HCT116 (cell line): ENCODE measurements at regions of chr9 and their contacts with region 1.

Region 1: GRCh38 chr9:101235105-101235866 is 149.5 kb downstream of the BAAT start:
- DNase-seq: peak; percentile 13
- ATAC-seq: peak; percentile 67
- H3K4me3 ChIP-seq: no peak overlapping the region
- H3K27ac ChIP-seq: no peak overlapping the region
- H3K4me1 ChIP-seq: no peaks in the 10 kb centered on the region
- H3K27me3 ChIP-seq: peaks cover 3% of the 10 kb centered on the region; the same call in 1 of the 2 replicates
- CTCF ChIP-seq: peak; percentile 33 to 58 (median 54); a peak in 5 of 6 replicates
- POLR2A ChIP-seq: no peak
- RAD21 ChIP-seq: peak; percentile 71

Region 2: GRCh38 chr9:100700689-100701318 is 534.5 kb before region 1 on chr9:
- CTCF ChIA-PET with region 1: interaction called, 8 read pairs
- POLR2A ChIA-PET with region 1: no interaction called
- RAD21 ChIA-PET with region 1: no interaction called
- intact Hi-C with region 1: loop called (anchors 5 kb)
- DNase-seq: peak; percentile 32
- ATAC-seq: peak; percentile 88
- H3K4me3 ChIP-seq: no peak overlapping the region
- H3K27ac ChIP-seq: no peak overlapping the region
- H3K4me1 ChIP-seq: no peaks in the 10 kb centered on the region
- H3K27me3 ChIP-seq: 0 out of 2 replicates have a peak, but pooled peaks cover 3% of the 10 kb centered on the region
- CTCF ChIP-seq: peak; percentile 45 to 83 (median 60); a peak in 5 of 6 replicates
- POLR2A ChIP-seq: no peak
- RAD21 ChIP-seq: peak; percentile 61

Region 3: DNA sequence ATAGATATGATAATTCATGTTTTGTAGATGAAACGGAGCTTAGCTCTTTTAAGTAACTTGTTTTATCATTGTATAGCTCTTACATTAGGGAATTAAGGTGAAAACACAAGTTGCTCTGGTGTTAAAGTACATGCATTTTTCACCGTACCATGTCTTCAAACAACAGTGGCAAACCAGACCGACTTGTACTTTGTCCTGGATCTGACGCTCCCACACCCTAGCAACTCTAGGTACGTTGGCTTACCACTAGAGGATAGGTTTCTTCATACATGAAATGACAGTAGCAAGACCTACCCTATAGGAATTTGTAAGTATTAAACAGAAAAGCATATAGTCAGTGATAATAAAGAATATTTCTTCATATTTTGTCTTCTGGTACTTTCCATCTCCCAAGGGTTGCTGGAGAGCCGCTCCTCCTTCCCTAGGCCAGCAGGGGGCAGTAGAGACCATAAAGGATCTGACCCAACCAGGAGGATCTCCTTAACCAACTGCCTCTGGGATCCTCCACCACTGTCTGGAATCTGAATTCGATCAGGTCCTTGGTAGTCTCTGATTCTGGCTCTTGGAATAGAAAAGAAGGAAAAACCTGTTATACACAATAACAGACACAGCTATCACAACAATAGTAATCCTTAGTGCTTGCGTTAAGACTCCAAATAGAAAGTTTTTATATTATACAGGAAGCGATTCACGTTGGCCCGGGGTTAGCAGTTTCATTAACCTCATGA is 520.8 kb before region 1 on chr9:
- CTCF ChIA-PET with region 1: interaction called, 5 read pairs
- POLR2A ChIA-PET with region 1: no interaction called
- RAD21 ChIA-PET with region 1: no interaction called
- intact Hi-C with region 1: loop called (anchors 1 kb)
- DNase-seq: peak; percentile 41
- ATAC-seq: peak; percentile 99
- H3K4me3 ChIP-seq: no peak overlapping the region
- H3K27ac ChIP-seq: no peak overlapping the region
- H3K4me1 ChIP-seq: no peaks in the 10 kb centered on the region
- H3K27me3 ChIP-seq: peaks cover 10% of the 10 kb centered on the region; the same call in 1 of the 2 replicates
- CTCF ChIP-seq: peak; percentile 52 to 95 (median 94)
- POLR2A ChIP-seq: no peak
- RAD21 ChIP-seq: peak; percentile 82

Region 4: DNA sequence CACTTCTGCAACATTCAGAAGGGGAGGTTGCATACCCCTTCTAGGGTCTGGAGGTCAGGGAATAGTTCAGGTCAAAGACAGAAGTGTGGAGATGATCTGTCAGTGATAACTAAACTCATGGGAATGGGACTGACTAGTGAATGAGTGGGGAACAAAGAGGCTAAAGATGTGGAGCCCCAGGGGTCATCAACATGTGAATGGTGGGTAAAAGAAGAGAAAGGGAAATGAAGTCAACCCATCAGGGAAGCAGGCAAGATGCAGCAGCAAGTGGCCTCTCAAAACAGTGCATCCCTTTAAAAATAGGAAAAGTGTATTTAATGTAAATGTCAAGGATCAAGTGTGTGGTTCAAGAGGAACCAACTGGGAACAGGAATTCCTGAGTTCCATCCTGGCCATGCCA is 136.9 kb before region 1 on chr9:
- CTCF ChIA-PET with region 1: no interaction called
- POLR2A ChIA-PET with region 1: no interaction called
- RAD21 ChIA-PET with region 1: no interaction called
- intact Hi-C with region 1: no loop called
- DNase-seq: no peak
- ATAC-seq: no peak
- H3K4me3 ChIP-seq: no peak overlapping the region
- H3K27ac ChIP-seq: no peak overlapping the region
- H3K4me1 ChIP-seq: no peaks in the 10 kb centered on the region
- H3K27me3 ChIP-seq: peaks cover 6% of the 10 kb centered on the region; the same call in 1 of the 2 replicates
- CTCF ChIP-seq: no peak
- POLR2A ChIP-seq: no peak
- RAD21 ChIP-seq: no peak

Region 5: DNA sequence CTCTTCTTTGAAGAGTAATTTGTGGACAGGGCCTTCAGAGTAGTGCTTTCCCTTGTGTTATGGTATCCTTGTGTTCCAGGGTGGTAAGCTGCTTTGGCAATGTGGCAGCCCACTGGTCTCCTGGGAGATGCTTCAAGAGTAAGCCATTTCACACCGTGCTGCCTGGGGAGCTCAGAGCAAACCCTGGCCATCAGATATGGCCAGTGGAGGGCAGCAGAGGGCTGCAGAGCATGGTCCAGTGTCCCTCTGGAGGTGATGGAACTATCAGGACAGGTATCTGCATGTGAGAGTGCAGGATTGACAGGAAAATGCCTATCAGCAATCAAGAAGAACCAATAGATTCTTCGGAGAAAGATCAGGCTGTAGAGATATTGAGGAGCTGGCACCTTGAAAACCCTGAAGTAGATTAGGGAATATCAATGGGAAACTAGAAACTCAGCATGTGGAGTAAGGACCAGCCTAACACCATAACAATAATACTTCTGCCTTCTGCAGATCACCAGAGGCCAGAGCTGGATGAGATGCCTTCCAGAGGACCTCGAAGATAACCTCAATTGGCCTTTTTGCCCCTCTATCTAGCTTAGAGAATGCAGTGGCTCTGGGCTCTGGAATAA is 116.0 kb before region 1 on chr9:
- CTCF ChIA-PET with region 1: interaction called, 9 read pairs
- POLR2A ChIA-PET with region 1: no interaction called
- RAD21 ChIA-PET with region 1: no interaction called
- intact Hi-C with region 1: loop called (anchors 2 kb)
- DNase-seq: peak; percentile 28
- ATAC-seq: peak; percentile 100
- H3K4me3 ChIP-seq: no peak overlapping the region
- H3K27ac ChIP-seq: no peak overlapping the region
- H3K4me1 ChIP-seq: no peaks in the 10 kb centered on the region
- H3K27me3 ChIP-seq: peaks cover 6% of the 10 kb centered on the region; the same call in 1 of the 2 replicates
- CTCF ChIP-seq: peak; percentile 52 to 89 (median 84); a peak in 5 of 6 replicates
- POLR2A ChIP-seq: no peak
- RAD21 ChIP-seq: peak; percentile 68

Region 6: GRCh38 chr9:101162231-101162630 is 73.1 kb before region 1 on chr9:
- CTCF ChIA-PET with region 1: no interaction called
- POLR2A ChIA-PET with region 1: no interaction called
- RAD21 ChIA-PET with region 1: no interaction called
- intact Hi-C with region 1: no loop called
- DNase-seq: no peak
- ATAC-seq: no peak
- H3K4me3 ChIP-seq: no peak overlapping the region
- H3K27ac ChIP-seq: no peak overlapping the region
- H3K4me1 ChIP-seq: no peaks in the 10 kb centered on the region
- H3K27me3 ChIP-seq: peaks cover 12% of the 10 kb centered on the region
- CTCF ChIP-seq: no peak
- POLR2A ChIP-seq: no peak
- RAD21 ChIP-seq: no peak

Region 7: DNA sequence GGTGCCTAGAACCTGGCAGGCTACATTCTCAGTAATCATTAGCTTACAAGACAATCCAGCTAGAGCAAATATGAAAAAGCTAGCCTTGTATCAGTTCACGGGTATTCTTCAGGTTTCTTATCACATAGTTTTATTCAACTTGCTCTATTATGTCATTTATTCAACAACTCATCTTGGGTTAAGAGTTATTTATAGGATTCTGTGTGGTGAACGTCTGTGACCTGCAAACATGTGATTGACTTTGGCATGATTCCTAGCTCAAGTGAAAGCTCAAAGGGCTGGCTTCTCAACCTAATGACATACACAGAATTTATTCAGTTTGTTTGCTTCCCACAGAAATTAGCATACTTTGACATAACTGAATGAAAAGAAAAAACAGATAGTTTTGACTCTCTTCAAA is 33.7 kb before region 1 on chr9:
- CTCF ChIA-PET with region 1: no interaction called
- POLR2A ChIA-PET with region 1: no interaction called
- RAD21 ChIA-PET with region 1: no interaction called
- intact Hi-C with region 1: no loop called
- DNase-seq: no peak
- ATAC-seq: no peak
- H3K4me3 ChIP-seq: no peak overlapping the region
- H3K27ac ChIP-seq: no peak overlapping the region
- H3K4me1 ChIP-seq: no peaks in the 10 kb centered on the region
- H3K27me3 ChIP-seq: peaks cover 25% of the 10 kb centered on the region; the same call in 1 of the 2 replicates
- CTCF ChIP-seq: no peak
- POLR2A ChIP-seq: no peak
- RAD21 ChIP-seq: no peak

Region 8: DNA sequence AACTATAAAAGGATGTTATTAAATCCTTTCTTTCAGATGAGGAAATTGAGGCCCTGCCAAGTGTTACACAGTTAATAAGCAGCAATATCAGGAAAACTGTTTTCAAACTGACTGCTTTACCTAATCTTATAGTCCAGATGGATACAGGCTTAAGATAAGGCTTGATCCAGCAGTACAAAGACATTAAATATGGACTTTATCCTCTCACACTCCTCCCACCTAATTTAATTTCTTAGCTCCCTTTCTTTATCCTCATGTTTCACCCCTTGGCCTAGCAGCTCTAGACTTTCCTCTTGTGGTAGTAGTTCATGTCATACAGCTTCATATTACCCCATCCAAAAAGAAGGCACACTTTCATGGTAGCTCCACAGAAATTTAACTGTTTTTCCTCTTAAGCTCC is 14.9 kb before region 1 on chr9:
- CTCF ChIA-PET with region 1: no interaction called
- POLR2A ChIA-PET with region 1: no interaction called
- RAD21 ChIA-PET with region 1: no interaction called
- intact Hi-C with region 1: no loop called
- DNase-seq: no peak
- ATAC-seq: no peak
- H3K4me3 ChIP-seq: no peak overlapping the region
- H3K27ac ChIP-seq: no peak overlapping the region
- H3K4me1 ChIP-seq: no peaks in the 10 kb centered on the region
- H3K27me3 ChIP-seq: no peaks in the 10 kb centered on the region
- CTCF ChIP-seq: no peak
- POLR2A ChIP-seq: no peak
- RAD21 ChIP-seq: no peak